ENCODE measurements at regions of chr1 and their contacts with region 1.

Region 1: DNA sequence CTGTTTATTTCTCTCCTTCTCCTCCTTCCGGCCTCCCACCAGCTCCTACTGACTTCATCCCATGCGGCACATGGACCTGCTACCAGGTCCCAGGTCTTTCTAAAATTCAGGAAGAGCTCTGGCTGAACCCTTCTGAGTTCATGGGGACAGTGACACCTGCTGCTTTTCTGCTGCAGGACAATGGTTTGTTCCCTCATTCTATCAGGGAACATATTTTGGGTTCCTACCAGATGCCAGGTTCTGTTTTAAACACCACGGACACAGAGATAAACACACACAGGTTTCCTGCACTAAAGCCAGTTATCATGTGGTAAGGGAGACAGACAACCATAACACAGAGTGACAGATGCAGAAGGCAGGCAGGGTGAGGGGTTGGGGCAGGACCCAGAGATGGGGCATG is 114.0 kb upstream of the RAB4A start:
- DNase-seq: peak in 1 of 2 donors; percentile 75
- H3K4me3 ChIP-seq: no peak overlapping the region
- H3K27ac ChIP-seq: peak overlapping the region in 1 of 2 donors; percentile 6
- H3K4me1 ChIP-seq: peaks cover 0 to 12% of the 10 kb centered on the region in 2 donors
- H3K27me3 ChIP-seq: no peaks in the 10 kb centered on the region
- CTCF ChIP-seq: peak; percentile 69 to 73 (median 72)

Region 2: GRCh38 chr1:228664399-228664914 is 492.4 kb before region 1 on chr1:
- intact Hi-C with region 1: loop called (anchors 1 kb)
- DNase-seq: peak in 1 of 2 donors; percentile 88
- H3K4me3 ChIP-seq: peak overlapping the region in 1 of 2 donors; percentile 41
- H3K27ac ChIP-seq: no peak overlapping the region
- H3K4me1 ChIP-seq: peaks cover 5 to 7% of the 10 kb centered on the region in 2 donors
- H3K27me3 ChIP-seq: no peaks in the 10 kb centered on the region
- CTCF ChIP-seq: peak; percentile 77 to 91 (median 77)

Region 3: GRCh38 chr1:229024528-229025130 is 132.2 kb before region 1 on chr1:
- intact Hi-C with region 1: no loop called
- DNase-seq: peak; percentile 40 to 85
- H3K4me3 ChIP-seq: no peak overlapping the region
- H3K27ac ChIP-seq: no peak overlapping the region
- H3K4me1 ChIP-seq: no peaks in the 10 kb centered on the region
- H3K27me3 ChIP-seq: no peaks in the 10 kb centered on the region
- CTCF ChIP-seq: no peak

Region 4: DNA sequence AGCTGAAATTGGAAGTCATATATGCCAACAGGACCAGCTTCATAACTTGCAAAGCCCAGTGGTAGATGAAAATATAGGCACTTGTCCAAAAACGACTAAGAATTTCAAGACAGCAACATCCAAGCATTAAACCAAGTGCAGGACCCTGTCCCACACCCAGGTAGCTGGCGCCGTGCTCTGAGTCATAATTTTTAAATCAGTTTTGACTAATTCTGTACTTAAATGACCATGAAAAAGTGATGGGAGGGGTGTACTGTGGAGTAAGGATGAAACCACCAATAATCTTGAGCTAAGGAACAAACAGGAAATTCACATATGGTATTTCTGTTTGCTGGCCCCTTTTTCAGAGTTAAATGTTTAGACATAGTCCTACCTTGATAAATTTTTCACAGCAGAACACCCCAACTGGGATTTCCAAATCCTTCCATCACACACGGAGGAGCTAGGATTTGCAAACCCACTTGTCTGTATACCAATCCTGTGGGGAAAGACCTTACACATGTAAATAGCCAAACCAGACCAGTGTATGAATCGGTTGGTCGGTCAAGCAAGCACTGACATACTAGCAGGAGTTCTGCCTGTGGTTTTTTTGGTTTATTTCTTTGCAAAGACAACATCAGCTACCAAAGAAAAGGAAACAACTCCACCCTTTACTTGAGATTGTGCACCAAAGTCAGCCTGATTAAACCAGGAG is 121.7 kb before region 1 on chr1:
- intact Hi-C with region 1: loop called (anchors 5 kb)
- DNase-seq: no peak
- H3K4me3 ChIP-seq: no peak overlapping the region
- H3K27ac ChIP-seq: no peak overlapping the region
- H3K4me1 ChIP-seq: peaks cover 0 to 6% of the 10 kb centered on the region in 2 donors
- H3K27me3 ChIP-seq: no peaks in the 10 kb centered on the region
- CTCF ChIP-seq: no peak

Region 5: DNA sequence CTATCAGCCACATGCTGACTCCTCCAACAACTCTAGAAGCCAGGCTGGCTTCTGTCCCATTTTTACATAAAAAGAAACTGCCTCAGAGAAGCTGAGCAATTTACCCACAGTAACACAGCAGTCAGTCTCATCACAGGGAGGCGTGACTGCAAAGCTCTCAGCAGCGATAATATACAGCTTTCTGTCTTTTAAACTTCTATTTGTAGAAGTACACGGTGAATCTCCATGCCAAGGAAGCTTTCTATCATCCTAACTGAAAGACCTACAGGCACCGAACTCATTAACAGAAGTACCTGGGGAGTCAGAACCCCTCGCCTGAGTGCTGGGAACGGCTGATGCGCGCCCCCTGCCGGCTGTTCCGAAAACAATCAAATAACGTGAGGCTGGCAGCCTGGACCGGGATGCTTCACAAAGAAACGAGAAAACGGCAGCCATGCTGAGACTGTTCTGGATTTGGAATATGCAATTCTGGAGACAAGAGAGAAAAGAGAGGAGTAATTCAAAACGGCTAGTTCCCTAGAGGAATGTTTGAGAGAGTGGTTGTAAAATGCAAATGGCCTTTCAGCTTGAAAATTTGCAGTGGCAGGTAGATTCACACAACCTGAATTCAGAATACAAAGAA is 70.5 kb after region 1 on chr1:
- intact Hi-C with region 1: loop called (anchors 2 kb)
- DNase-seq: peak; percentile 30 to 90
- H3K4me3 ChIP-seq: no peak overlapping the region
- H3K27ac ChIP-seq: no peak overlapping the region
- H3K4me1 ChIP-seq: peaks cover 9 to 25% of the 10 kb centered on the region in 2 donors
- H3K27me3 ChIP-seq: no peaks in the 10 kb centered on the region
- CTCF ChIP-seq: peak; percentile 74 to 86 (median 85)

Region 6: GRCh38 chr1:229378586-229379367 is 221.9 kb after region 1 on chr1:
- intact Hi-C with region 1: no loop called
- DNase-seq: no peak
- H3K4me3 ChIP-seq: no peak overlapping the region
- H3K27ac ChIP-seq: no peak overlapping the region
- H3K4me1 ChIP-seq: no peaks in the 10 kb centered on the region
- H3K27me3 ChIP-seq: no peaks in the 10 kb centered on the region
- CTCF ChIP-seq: no peak

Measured in ascending aorta (tissue), 2 donors.